ENCODE measurements at regions of chr11 and their contacts with region 1.

Region 1: DNA sequence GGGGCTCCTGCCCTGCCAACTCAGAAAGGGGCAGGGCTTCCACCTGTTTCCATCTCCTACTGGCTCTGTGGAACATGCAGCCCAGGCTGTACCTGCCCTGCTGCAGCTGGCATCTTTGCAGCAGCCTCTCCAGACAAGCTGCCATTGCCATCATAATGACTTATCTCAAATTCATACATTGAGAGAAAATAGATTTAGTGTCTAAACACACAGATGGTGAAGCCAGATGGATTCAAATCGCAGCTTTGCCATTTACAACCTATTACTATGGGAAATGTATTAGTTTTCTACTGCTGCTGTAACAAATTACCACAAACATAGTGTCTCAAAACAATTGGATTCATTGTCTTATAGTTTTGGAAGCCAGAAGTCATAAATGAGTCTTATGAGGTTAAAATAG is 260.0 kb downstream of the KCNA4 start:
- DNase-seq: no peak
- H3K4me3 ChIP-seq: no peak overlapping the region
- H3K27ac ChIP-seq: no peak overlapping the region
- H3K4me1 ChIP-seq: no peaks in the 10 kb centered on the region
- H3K27me3 ChIP-seq: no peaks in the 10 kb centered on the region
- CTCF ChIP-seq: no peak
- POLR2A ChIP-seq: no peak

Region 2: DNA sequence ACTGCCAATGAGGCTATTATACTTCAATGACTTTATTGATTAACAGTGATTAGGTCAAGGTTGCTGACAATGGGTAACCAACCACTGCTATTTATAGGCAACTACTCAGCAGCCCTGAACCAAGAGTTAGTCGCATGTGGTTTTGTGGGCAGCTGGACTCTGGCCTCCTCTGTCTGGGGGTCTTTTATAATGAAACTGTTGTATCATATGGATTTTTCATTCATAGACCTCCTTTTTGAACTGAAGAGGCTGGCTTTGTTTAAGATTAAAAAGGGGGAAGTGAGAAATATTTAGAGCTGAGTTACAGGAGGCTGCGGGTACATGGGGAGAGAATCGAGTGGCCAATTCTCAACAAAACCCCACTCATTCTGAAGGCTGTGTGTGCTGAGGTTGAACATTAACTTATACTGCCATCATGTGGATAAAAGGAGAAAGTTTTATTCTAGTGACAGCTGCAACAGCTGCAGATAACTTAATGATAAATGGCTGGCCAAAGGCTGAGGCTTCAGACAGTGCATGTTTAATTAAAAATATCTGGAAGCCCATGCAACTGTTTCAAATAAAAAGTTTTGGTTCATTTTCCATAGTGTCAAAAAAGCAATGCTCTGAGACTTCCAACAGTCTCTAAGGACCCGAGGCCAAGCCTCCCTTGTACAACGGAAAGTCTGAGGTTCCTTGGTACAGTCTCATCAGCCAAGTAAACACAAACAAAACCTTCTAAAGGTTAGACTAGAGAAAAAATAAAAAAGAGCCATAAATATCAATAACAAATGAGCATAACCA is 422.7 kb before region 1 on chr11:
- intact Hi-C with region 1: no loop called
- DNase-seq: no peak
- H3K4me3 ChIP-seq: no peak overlapping the region
- H3K27ac ChIP-seq: no peak overlapping the region
- H3K4me1 ChIP-seq: no peaks in the 10 kb centered on the region
- H3K27me3 ChIP-seq: no peaks in the 10 kb centered on the region
- CTCF ChIP-seq: peak in 1 of 4 experiments; percentile 17
- POLR2A ChIP-seq: no peak

Region 3: DNA sequence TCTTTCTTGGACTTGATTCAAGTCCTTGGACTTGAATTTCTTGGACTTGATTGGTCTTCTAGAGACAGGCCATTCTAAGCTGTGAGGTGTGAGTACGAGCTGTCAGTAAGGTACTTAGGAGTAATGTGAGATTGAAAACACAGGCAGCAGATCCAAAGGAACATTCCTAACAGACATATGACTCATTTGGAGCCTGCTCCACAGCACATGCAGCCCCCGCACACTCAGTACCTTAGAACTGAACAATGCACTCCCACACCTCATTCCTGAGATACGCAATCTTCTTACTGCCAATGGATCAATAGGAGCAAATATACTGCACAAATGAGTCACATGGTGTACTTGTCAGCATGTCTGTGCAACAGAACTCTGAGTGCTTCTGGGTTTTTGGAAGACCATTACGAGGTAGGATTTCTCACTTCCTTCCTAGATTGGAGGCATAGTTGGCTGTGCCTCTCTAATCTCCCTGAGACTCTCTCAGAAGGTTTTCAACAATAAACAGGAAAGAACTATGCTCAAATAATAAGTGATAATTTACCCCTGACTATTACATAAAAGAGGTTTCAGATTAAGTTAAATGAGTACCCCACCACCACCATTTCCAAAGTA is 16.9 kb after region 1 on chr11:
- intact Hi-C with region 1: loop called (anchors 2 kb)
- DNase-seq: peak in 1 of 2 donors; percentile 48
- H3K4me3 ChIP-seq: no peak overlapping the region
- H3K27ac ChIP-seq: peak overlapping the region; percentile 53 to 68
- H3K4me1 ChIP-seq: no peaks in the 10 kb centered on the region
- H3K27me3 ChIP-seq: no peaks in the 10 kb centered on the region
- CTCF ChIP-seq: no peak
- POLR2A ChIP-seq: no peak

Region 4: GRCh38 chr11:29786092-29786491 is 29.2 kb after region 1 on chr11:
- intact Hi-C with region 1: no loop called
- DNase-seq: no peak
- H3K4me3 ChIP-seq: no peak overlapping the region
- H3K27ac ChIP-seq: no peak overlapping the region
- H3K4me1 ChIP-seq: no peaks in the 10 kb centered on the region
- H3K27me3 ChIP-seq: no peaks in the 10 kb centered on the region
- CTCF ChIP-seq: no peak
- POLR2A ChIP-seq: no peak

Region 5: GRCh38 chr11:29801561-29801960 is 44.7 kb after region 1 on chr11:
- intact Hi-C with region 1: no loop called
- DNase-seq: no peak
- H3K4me3 ChIP-seq: no peak overlapping the region
- H3K27ac ChIP-seq: no peak overlapping the region
- H3K4me1 ChIP-seq: no peaks in the 10 kb centered on the region
- H3K27me3 ChIP-seq: no peaks in the 10 kb centered on the region
- CTCF ChIP-seq: no peak
- POLR2A ChIP-seq: no peak